A673 (cell line): ENCODE measurements at regions of chr3 and their contacts with region 1.

Region 1: GRCh38 chr3:25648107-25648535 is 16.6 kb downstream of the TOP2B start:
- DNase-seq: peak; percentile 87
- H3K4me3 ChIP-seq: no peak overlapping the region
- H3K27ac ChIP-seq: no peak overlapping the region
- H3K4me1 ChIP-seq: no peaks in the 10 kb centered on the region
- H3K27me3 ChIP-seq: no peaks in the 10 kb centered on the region
- CTCF ChIP-seq: peak; percentile 94

Region 2: GRCh38 chr3:25831578-25831977 is 183.5 kb after region 1 on chr3:
- CTCF ChIA-PET with region 1: interaction called, 9 read pairs
- POLR2A ChIA-PET with region 1: no interaction called
- intact Hi-C with region 1: loop called (anchors 2 kb)
- DNase-seq: peak; percentile 65
- H3K4me3 ChIP-seq: no peak overlapping the region
- H3K27ac ChIP-seq: no peak overlapping the region
- H3K4me1 ChIP-seq: peaks cover 17% of the 10 kb centered on the region
- H3K27me3 ChIP-seq: peaks cover 29% of the 10 kb centered on the region
- CTCF ChIP-seq: peak; percentile 51; the same call in 1 of the 2 replicates

Region 3: DNA sequence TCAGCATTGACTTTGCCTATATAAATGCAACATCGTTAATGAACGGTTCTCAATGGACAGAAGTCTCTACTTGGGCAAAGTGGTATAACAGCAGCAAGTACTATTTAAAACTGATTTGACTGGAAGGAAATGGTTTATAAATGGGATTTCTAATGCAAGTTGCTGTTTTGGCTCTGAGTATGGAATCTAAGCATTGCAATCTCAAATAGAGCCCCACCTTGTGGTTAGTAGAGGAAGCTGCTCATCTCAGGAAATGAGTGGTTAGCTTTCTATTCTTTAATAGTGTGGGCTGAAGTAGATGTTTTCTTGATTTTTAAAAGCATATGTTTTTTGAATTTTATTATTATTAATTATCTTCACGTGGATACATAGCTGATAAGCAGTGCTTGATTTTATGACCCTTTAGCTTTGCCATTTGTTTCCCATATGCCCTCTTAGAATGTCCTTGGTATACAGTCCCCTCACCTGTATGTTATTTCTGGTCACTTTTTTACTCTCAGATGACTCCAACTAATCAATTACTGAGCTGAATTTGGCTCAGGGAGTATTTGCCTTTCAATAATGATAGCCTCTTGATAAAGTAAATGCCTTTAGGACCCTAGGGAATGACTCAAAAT is 208.9 kb after region 1 on chr3:
- CTCF ChIA-PET with region 1: interaction called, 8 read pairs
- POLR2A ChIA-PET with region 1: no interaction called
- intact Hi-C with region 1: loop called (anchors 1 kb)
- DNase-seq: peak; percentile 66
- H3K4me3 ChIP-seq: no peak overlapping the region
- H3K27ac ChIP-seq: no peak overlapping the region
- H3K4me1 ChIP-seq: no peaks in the 10 kb centered on the region
- H3K27me3 ChIP-seq: no peaks in the 10 kb centered on the region
- CTCF ChIP-seq: peak; percentile 88

Region 4: GRCh38 chr3:25904206-25904605 is 256.1 kb after region 1 on chr3:
- CTCF ChIA-PET with region 1: no interaction called
- POLR2A ChIA-PET with region 1: no interaction called
- intact Hi-C with region 1: loop called (anchors 2 kb)
- DNase-seq: peak; percentile 71
- H3K4me3 ChIP-seq: no peak overlapping the region
- H3K27ac ChIP-seq: peak overlapping the region; percentile 40
- H3K4me1 ChIP-seq: peaks cover 8% of the 10 kb centered on the region
- H3K27me3 ChIP-seq: no peaks in the 10 kb centered on the region
- CTCF ChIP-seq: peak; percentile 52

Region 5: GRCh38 chr3:26118165-26118564 is 470.0 kb after region 1 on chr3:
- CTCF ChIA-PET with region 1: no interaction called
- POLR2A ChIA-PET with region 1: no interaction called
- intact Hi-C with region 1: loop called (anchors 5 kb)
- DNase-seq: peak; percentile 49
- H3K4me3 ChIP-seq: no peak overlapping the region
- H3K27ac ChIP-seq: no peak overlapping the region
- H3K4me1 ChIP-seq: no peaks in the 10 kb centered on the region
- H3K27me3 ChIP-seq: no peaks in the 10 kb centered on the region
- CTCF ChIP-seq: peak; percentile 46; the same call in 1 of the 2 replicates

Region 6: DNA sequence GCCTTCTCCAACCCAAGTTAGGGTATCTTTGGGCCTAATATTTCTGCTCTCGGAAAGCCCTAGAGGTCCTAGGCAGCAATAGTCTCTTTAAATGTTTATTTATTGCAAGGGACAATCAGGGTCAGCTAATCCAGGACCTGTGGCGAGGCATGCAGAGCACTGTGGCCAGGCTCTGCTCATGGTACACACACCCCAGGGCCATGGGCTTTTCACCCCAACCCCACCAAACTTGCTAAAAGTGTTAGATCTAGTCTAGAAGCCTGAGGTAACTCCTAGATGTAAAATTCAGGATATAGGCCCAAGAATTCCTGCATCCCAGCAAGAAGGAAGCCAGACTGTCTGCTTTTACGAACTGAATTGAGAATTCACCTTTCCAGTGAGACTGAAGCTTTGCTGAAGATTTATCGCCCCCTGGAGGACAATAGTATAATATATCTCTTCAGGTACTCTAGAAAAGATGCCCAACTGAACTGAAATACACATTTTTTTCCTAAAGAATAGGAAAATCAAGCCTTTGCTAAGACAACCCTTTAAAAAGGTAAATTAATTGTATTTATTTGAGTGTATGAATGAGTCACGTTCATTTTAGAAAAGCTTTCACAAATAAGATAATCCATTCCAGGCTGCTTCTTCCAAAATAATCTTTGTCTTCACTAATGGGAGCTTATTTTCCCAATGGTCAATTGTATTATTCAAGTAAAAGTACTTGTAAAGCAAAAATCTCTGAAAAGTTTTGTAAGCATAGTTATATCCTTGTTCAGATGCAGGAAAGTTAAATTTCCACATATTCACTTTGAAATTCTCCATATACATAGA is 1064.3 kb after region 1 on chr3:
- CTCF ChIA-PET with region 1: no interaction called
- POLR2A ChIA-PET with region 1: no interaction called
- intact Hi-C with region 1: loop called (anchors 5 kb)
- DNase-seq: peak; percentile 70
- H3K4me3 ChIP-seq: no peak overlapping the region
- H3K27ac ChIP-seq: no peak overlapping the region
- H3K4me1 ChIP-seq: no peaks in the 10 kb centered on the region
- H3K27me3 ChIP-seq: no peaks in the 10 kb centered on the region
- CTCF ChIP-seq: peak; percentile 69